GM13977 (cell line): ENCODE measurements at regions of chr22 and their contacts with region 1.

Region 1: GRCh38 chr22:40641269-40641668 is 4.8 kb upstream of the MRTFA start:
- DNase-seq: no peak
- CTCF ChIP-seq: no peak

Region 2: GRCh38 chr22:38802671-38803121 is 1838.6 kb before region 1 on chr22:
- in situ Hi-C with region 1: no loop called
- DNase-seq: no peak
- CTCF ChIP-seq: no peak

Region 3: GRCh38 chr22:40436505-40437451 is 204.5 kb before region 1 on chr22:
- in situ Hi-C with region 1: loop called (anchors 10 kb)
- DNase-seq: peak; percentile 54
- CTCF ChIP-seq: peak; percentile 42

Region 4: GRCh38 chr22:40525249-40525884 is 115.9 kb before region 1 on chr22:
- in situ Hi-C with region 1: loop called (anchors 5 kb)
- DNase-seq: no peak
- CTCF ChIP-seq: peak; percentile 73

Region 5: GRCh38 chr22:40694411-40694810 is 53.1 kb after region 1 on chr22:
- in situ Hi-C with region 1: no loop called
- DNase-seq: no peak
- CTCF ChIP-seq: no peak

Region 6: GRCh38 chr22:40746428-40747220 is 105.4 kb after region 1 on chr22:
- in situ Hi-C with region 1: no loop called
- DNase-seq: no peak
- CTCF ChIP-seq: no peak